ENCODE measurements at regions of chr9 and their contacts with region 1.

Region 1: DNA sequence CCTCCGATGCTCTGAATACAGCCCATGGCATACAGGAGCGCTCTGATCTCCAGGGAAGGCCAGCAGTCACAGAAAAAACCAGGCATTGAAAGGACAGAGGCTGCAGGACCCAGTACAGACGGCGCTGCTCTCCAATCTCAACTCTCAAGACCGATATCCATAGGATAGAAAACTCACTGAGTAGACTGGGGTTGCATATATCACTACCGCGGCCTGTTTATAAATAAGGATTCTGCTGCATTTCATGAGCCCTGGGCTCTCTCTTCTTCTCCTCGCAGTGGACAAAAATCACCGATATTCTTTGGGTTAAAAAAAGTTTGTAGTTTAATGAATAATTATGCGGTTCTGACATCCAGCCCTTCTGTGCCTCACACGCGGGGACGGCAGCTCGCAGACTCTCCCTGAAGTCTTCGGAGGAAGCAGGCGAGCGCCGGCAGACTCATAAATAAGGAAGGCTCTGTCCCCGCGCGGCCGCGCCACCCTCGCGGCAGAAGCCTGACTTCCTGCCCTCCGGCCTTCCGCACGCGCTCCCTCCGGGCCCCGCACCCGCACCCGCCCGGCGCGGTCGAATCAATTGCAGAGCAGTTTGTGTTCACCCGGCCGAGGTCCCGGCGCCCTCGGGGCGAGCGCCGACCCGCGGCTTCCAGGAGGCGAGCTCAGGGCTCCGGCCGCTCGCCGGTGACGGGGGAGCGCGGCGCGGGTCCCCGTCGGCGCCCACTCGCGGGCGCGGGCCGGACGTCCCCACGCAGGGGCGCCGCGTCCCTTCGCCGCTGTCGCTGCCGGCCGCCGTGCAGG is at the start of gene FAM78A:
- DNase-seq: peak; percentile 61 to 78 (median 70)
- H3K4me3 ChIP-seq: peak within 1 kb of the TSS; percentile 66 to 97 (median 92)
- H3K27ac ChIP-seq: peak within 1 kb of the TSS; percentile 84 to 96
- H3K4me1 ChIP-seq: peaks cover 11 to 58% (median 53%) of the 10 kb centered on the region in 4 experiments
- H3K27me3 ChIP-seq: peaks cover 0 to 5% (median under 1%) of the 10 kb centered on the region in 5 experiments

Region 2: DNA sequence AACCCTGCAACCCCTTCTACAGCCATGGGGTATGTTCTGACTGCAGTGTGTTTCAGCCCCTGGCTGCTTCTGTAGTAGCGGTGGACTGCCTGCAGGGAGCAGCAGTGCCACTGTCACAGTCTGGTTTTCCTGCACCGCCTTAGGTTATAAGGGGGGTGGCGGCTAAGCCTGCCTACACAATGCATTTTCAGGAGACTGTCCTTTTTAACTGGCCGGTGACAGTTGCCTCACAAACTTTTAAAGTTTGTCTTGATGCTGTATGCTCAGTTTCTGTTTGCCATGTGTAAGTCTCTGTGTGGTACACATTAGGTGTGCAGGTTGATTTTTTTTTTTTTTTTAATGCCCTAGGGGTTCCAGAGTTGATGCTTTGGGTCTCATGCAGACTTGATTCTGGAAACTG is 97.9 kb before region 1 on chr9:
- CTCF ChIA-PET with region 1: interaction called, 10 read pairs
- POLR2A ChIA-PET with region 1: no interaction called
- DNase-seq: peak; percentile 69 to 90 (median 86)
- H3K4me3 ChIP-seq: no peak overlapping the region
- H3K27ac ChIP-seq: no peak overlapping the region
- H3K4me1 ChIP-seq: peaks cover 3 to 11% (median 8%) of the 10 kb centered on the region in 4 experiments
- H3K27me3 ChIP-seq: no peaks in the 10 kb centered on the region

Region 3: DNA sequence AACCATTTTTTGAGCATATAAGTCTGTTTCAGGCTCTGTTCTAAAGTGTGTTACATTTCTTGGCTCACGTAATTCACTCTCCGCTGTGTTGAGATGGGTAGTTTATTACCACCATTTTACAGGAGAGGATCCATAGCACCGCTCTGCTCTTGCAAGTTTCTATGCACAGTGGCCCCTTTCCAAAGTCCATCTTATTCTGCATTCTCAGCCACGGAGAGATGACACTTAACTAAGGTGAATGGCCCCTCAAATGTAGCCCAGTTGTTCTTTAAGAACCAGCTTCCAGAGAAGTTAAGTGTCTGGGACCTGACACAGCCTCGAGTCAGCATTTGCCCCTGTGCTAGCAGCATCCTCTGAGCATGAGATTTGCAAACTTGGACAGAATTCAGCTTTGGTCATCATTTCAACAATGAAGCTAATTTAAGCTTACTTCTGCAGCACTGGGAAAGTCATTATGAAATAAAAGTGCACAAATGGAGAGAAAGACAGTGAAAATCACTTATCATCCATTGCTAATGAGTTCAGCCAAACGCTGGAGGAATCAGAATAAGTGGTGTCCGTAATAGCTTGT is 61.9 kb before region 1 on chr9:
- CTCF ChIA-PET with region 1: interaction called, 28 read pairs
- POLR2A ChIA-PET with region 1: interaction called, 3 read pairs
- DNase-seq: no peak
- H3K4me3 ChIP-seq: peak overlapping the region in 3 of 7 experiments; percentile 23 to 60 (median 47)
- H3K27ac ChIP-seq: peak overlapping the region in 1 of 2 experiments; percentile 57
- H3K4me1 ChIP-seq: peaks cover 4 to 50% (median 20%) of the 10 kb centered on the region in 4 experiments
- H3K27me3 ChIP-seq: no peaks in the 10 kb centered on the region

Region 4: GRCh38 chr9:131237931-131238401 is 38.3 kb before region 1 on chr9:
- CTCF ChIA-PET with region 1: interaction called, 13 read pairs
- POLR2A ChIA-PET with region 1: interaction called, 3 read pairs
- DNase-seq: peak; percentile 83 to 95 (median 95)
- H3K4me3 ChIP-seq: peak overlapping the region in 6 of 7 experiments; percentile 13 to 60 (median 49)
- H3K27ac ChIP-seq: peak overlapping the region; percentile 59 to 81
- H3K4me1 ChIP-seq: peaks cover 12 to 59% (median 53%) of the 10 kb centered on the region in 4 experiments
- H3K27me3 ChIP-seq: no peaks in the 10 kb centered on the region

Region 5: DNA sequence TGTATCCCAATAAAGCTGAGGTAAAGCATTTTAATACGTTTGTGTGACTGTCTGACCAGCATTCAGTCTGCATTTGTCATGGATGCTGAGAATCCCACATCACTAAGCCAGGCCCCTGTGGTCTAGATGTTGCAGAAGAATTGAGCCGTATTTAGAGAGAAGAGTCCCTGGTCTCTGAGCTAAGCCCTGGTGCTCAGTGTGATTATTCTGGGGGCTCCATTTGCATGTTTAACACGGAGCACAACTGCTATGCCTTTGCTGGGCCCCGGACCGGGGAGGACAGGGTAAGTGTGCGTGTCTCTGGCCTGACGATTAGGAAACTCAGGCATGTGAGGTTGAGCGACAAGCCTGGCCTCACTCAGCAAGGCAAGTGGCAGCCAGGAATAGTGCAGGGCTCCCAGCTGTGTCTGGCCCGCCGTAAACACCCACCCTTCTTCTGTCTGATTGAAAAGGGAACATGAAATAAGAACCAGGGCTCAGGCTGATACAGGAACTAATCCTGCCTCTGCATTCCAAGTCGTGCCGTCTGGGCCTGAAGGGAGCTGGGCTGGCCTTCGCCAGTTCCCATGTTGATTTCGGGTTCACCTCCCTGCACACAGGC is 22.3 kb before region 1 on chr9:
- CTCF ChIA-PET with region 1: interaction called, 155 read pairs
- POLR2A ChIA-PET with region 1: interaction called, 33 read pairs
- DNase-seq: peak in 2 of 3 donors; percentile 76 to 80
- H3K4me3 ChIP-seq: peak overlapping the region in 2 of 7 experiments; percentile 11 to 22
- H3K27ac ChIP-seq: peak overlapping the region in 1 of 2 experiments; percentile 58
- H3K4me1 ChIP-seq: peaks cover 8 to 77% (median 75%) of the 10 kb centered on the region in 4 experiments
- H3K27me3 ChIP-seq: no peaks in the 10 kb centered on the region

Region 6: GRCh38 chr9:131262327-131263032 is 13.8 kb before region 1 on chr9:
- CTCF ChIA-PET with region 1: interaction called, 155 read pairs
- POLR2A ChIA-PET with region 1: interaction called, 33 read pairs
- DNase-seq: peak in 1 of 3 donors; percentile 44
- H3K4me3 ChIP-seq: no peak overlapping the region
- H3K27ac ChIP-seq: no peak overlapping the region
- H3K4me1 ChIP-seq: peaks cover 0 to 52% (median 45%) of the 10 kb centered on the region in 4 experiments
- H3K27me3 ChIP-seq: no peaks in the 10 kb centered on the region

Region 7: GRCh38 chr9:131320031-131320685 is 43.9 kb after region 1 on chr9:
- CTCF ChIA-PET with region 1: no interaction called
- POLR2A ChIA-PET with region 1: no interaction called
- DNase-seq: no peak
- H3K4me3 ChIP-seq: no peak overlapping the region
- H3K27ac ChIP-seq: no peak overlapping the region
- H3K4me1 ChIP-seq: no peaks in the 10 kb centered on the region
- H3K27me3 ChIP-seq: no peaks in the 10 kb centered on the region

Region 8: DNA sequence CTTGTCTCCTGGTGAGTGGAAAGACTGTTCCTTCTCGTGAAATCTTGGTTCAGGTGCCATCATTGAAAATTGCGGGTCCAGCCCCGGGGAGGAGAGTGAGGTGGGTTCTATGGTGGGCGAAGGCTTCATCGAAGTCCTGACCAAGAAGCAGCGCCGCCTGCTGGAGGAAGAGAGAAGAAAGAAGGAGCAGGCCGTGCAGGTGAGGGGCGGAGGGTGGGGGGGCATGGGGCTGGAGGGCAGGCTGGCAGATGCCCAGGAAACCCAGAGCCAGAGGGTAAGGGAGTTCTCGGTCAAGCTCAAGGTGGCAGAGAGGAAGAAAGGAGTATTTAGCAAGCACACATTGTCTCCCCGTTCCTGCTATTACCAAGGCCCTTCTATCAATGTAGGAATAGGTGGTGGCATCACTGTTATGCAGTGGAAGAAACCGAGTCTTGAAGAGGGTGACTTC is 202.2 kb after region 1 on chr9:
- CTCF ChIA-PET with region 1: no interaction called
- POLR2A ChIA-PET with region 1: no interaction called
- DNase-seq: peak; percentile 44 to 66 (median 58)
- H3K4me3 ChIP-seq: no peak overlapping the region
- H3K27ac ChIP-seq: no peak overlapping the region
- H3K4me1 ChIP-seq: no peaks in the 10 kb centered on the region
- H3K27me3 ChIP-seq: no peaks in the 10 kb centered on the region